ENCODE measurements at regions of chr4 and their contacts with region 1.

Region 1: GRCh38 chr4:140861359-140862176 is 105.4 kb upstream of the TBC1D9 start:
- DNase-seq: peak; percentile 77
- H3K4me3 ChIP-seq: no peak overlapping the region
- H3K27ac ChIP-seq: no peak overlapping the region
- H3K4me1 ChIP-seq: peaks cover 5% of the 10 kb centered on the region
- H3K27me3 ChIP-seq: no peaks in the 10 kb centered on the region
- CTCF ChIP-seq: peak; percentile 86

Region 2: DNA sequence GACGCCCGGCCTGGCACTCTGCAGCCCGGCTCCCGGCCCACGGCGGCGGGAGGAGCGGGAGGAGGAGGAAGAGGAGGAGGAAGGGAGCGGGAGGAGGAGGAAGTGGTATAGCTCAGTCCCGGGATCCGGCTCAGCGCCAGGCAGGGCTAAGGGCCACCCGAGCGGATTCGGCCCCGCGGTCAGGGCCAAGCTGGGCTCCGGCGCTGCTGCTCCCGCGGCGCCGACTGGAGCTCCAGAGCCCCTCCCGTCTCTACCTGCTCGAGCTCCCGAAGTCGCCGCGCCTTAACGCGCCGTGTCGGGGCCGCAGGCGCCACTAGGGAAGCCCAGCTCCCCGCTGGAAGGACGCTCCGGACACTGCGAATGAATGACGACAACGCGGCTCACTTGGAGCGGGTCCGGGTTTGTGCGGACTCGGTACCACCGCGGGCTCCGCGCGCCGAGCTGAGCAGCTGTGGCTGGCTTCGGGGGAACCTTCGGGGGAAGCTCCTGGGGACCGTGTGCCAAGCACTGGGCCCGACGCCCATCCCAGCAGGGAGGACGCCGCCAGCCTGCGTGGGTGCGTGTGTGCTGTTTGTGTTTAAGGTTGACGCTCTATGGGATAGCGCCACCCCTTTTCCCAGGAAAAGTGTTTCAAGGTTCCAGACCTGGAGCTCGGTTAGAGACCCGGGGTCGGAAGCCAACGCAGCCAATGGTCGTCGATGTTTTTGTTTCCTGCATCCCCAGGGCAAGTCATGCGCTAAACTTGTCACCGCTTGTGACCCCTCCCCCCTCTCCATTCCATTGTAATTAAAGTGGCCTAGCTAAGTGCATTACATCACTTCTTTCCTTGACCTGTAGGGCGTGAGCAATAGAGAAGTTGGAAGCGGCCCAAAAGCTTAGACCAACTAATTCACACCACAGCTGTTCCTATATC is 105.0 kb before region 1 on chr4 and contains the start of gene TBC1D9:
- CTCF ChIA-PET with region 1: no interaction called
- POLR2A ChIA-PET with region 1: no interaction called
- intact Hi-C with region 1: no loop called
- DNase-seq: peak; percentile 83
- H3K4me3 ChIP-seq: peak within 1 kb of the TSS; percentile 89
- H3K27ac ChIP-seq: peak within 1 kb of the TSS; percentile 89
- H3K4me1 ChIP-seq: peaks cover 21% of the 10 kb centered on the region
- H3K27me3 ChIP-seq: no peaks in the 10 kb centered on the region
- CTCF ChIP-seq: no peak
- total RNA-seq, gene TBC1D9: 20.6 and 22.4 TPM in 2 replicates

Region 3: DNA sequence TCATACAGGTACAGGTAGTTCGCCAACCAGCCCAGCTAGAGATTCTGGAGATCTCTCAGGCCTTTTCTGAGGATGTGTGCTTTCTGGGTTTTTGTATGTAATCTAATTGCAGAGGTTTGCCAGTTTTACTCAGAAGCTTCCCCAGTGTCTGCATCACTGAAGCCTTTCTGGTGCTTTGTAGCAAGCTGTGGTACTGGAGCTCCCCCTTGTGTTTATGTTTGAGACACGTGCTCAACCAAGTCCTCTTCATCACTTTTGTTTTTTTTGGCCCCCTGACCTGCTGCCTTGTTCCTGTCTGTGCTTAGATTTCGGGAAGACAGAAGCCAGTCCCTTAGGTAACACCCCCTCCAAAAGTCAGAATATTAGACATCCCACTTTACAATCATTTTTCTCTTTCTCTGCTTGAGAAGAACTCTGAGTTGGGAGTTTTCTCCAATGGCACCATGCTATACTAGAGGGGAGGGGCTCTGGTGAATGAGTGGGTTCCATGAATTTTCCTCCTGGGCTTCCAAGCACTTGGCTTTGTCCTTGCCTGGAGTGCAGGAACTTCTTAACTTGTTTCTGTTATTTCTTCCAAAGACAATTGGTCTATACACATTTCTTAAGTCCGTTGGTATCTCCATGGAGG is 23.0 kb after region 1 on chr4:
- CTCF ChIA-PET with region 1: interaction called, 3 read pairs
- POLR2A ChIA-PET with region 1: no interaction called
- intact Hi-C with region 1: loop called (anchors 1 kb)
- DNase-seq: peak; percentile 78
- H3K4me3 ChIP-seq: no peak overlapping the region
- H3K27ac ChIP-seq: no peak overlapping the region
- H3K4me1 ChIP-seq: no peaks in the 10 kb centered on the region
- H3K27me3 ChIP-seq: no peaks in the 10 kb centered on the region
- CTCF ChIP-seq: peak; percentile 85

Region 4: GRCh38 chr4:140906993-140907962 is 45.7 kb after region 1 on chr4:
- CTCF ChIA-PET with region 1: no interaction called
- POLR2A ChIA-PET with region 1: no interaction called
- intact Hi-C with region 1: no loop called
- DNase-seq: no peak
- H3K4me3 ChIP-seq: no peak overlapping the region
- H3K27ac ChIP-seq: no peak overlapping the region
- H3K4me1 ChIP-seq: peaks cover 10% of the 10 kb centered on the region
- H3K27me3 ChIP-seq: no peaks in the 10 kb centered on the region
- CTCF ChIP-seq: no peak